ENCODE measurements at regions of chr1 and their contacts with region 1.

Region 1: DNA sequence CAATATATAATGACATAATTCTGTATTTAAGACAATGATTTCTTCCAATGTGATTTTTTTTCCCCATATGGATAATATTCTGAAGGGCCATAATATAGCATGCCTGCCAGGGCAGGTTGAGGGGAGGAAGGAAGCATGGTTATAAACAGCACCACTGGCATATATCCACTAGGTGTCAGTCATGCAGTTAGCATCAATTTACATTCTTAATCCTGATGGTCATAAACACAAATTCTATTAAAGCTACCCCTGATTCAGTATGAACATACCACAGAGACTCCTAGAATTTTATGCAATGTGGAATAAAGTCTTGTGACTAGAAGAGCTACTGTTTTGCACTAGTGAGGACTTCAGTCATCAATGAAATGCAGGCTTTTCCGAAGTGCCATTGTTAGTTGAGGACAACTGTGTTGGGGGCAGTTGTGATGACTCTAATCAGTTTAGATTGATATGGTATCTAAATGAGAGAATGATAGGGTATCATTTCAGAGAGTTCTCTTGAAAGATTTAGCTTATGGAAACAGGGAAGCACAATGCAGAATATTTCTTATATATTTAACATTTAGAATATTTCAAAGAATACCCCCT is 342.7 kb upstream of the NR5A2 start:
- DNase-seq: peak in 2 of 10 donors; percentile 10 to 14

Region 2: DNA sequence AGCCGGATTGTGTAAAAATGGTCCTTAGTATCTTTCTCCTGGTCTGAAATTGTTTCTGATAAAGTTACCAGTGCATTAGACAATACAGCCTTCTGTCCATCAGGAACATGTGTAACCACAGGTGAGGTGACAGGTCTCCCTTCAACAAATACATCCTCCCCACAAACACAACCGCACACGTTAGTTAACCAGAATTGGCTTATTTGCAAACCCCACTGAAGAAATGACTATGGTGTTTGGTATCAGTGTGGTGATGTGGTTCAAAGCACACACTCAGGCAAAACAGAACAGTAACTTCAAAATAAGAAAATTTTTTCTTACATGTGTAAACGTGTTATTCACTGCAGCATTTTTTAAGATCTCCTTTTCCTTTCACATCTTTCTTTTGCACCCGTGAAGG is 174.5 kb before region 1 on chr1:
- intact Hi-C with region 1: no loop called
- DNase-seq: no peak

Region 3: GRCh38 chr1:200302192-200302920 is 617.6 kb after region 1 on chr1:
- intact Hi-C with region 1: loop called (anchors 10 kb)
- DNase-seq: peak in 7 of 10 donors; percentile 14 to 91 (median 34)

Region 4: GRCh38 chr1:200488375-200489165 is 803.8 kb after region 1 on chr1:
- intact Hi-C with region 1: loop called (anchors 2 kb)
- DNase-seq: peak in 5 of 10 donors; percentile 16 to 59 (median 51)

Region 5: GRCh38 chr1:200510228-200510623 is 825.4 kb after region 1 on chr1:
- intact Hi-C with region 1: loop called (anchors 2 kb)
- DNase-seq: peak in 8 of 10 donors; percentile 27 to 86 (median 74)

Measured in posterior cingulate gyrus (tissue), 11 donors.